Heart left ventricle (tissue), 16 donors: ENCODE measurements at regions of chr15 and their contacts with region 1.

Region 1: GRCh38 chr15:53899366-53899765 is 78.9 kb upstream of the UNC13C start:
- DNase-seq: no peak
- ATAC-seq: no peak
- H3K4me3 ChIP-seq: no peak overlapping the region
- H3K27ac ChIP-seq: no peak overlapping the region
- H3K4me1 ChIP-seq: no peaks in the 10 kb centered on the region
- H3K27me3 ChIP-seq: no peaks in the 10 kb centered on the region
- CTCF ChIP-seq: no peak
- POLR2A ChIP-seq: no peak

Region 2: DNA sequence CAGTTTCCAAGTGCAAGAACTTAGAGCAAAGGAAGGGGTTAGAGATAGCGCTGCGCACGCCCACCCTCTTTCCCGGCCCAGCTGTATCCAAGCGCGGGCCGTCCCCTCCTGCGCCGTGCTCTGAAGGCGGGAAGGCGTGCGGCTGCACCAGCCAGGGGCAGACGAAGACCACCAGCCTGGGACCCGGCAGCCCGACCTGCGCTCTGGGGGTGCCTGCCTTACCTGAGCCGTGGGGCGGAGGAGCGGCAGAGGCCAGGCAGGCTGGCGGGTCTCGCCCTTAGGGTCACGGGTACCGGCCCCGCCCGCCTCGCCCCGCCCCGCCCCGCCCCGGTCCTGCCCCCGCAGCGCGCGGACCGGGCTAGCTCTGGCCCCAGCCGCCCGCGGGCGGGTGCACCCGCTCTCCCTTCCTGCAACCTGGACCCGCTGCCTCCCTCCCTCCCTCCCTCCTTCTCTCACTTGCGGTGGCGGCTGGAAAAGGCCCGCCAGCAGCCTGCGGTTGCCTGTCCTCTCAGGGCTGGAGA is 139.9 kb before region 1 on chr15 and contains the start of gene WDR72:
- intact Hi-C with region 1: no loop called
- DNase-seq: no peak
- ATAC-seq: peak in 1 of 4 donors; percentile 27
- H3K4me3 ChIP-seq: peak within 1 kb of the TSS in 3 of 12 donors; percentile 33 to 36 (median 34)
- H3K27ac ChIP-seq: no peak within 1 kb of the TSS
- H3K4me1 ChIP-seq: peaks cover 0 to 6% (median 0%) of the 10 kb centered on the region in 12 donors
- H3K27me3 ChIP-seq: peaks cover 3 to 39% (median 13%) of the 10 kb centered on the region in 9 donors
- CTCF ChIP-seq: no peak
- POLR2A ChIP-seq: no peak
- total RNA-seq, gene WDR72: 0.08 to 0.11 TPM in 2 of 9 donors, not detected in the others

Region 3: DNA sequence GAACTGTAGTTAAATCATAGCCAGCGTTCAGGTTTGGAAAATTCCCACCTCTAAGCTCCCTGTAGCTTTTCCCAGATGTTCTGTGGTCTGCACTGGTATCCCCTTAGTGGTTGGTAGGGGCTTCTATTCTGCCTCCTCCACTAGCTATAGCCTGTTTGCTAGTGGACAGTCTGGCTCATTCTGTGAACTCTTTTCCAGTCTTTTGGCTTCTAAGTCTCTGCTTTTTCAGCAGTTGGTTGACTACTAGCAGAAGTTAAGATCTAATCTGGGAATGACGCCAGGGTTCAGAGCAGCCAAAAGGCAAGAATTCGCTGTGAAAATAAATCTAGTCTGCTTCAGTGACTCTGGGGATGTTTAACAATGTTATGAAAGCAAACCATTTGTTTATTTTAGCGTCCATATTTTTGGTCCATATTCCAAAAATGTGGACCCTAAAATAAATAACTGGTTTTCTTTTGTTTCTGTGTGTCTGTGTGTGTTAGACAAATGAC is 66.2 kb before region 1 on chr15:
- intact Hi-C with region 1: loop called in 1 of 10 experiments (anchors 10 kb)
- DNase-seq: peak in 3 of 5 donors; percentile 30 to 52 (median 30)
- ATAC-seq: peak; percentile 44 to 67 (median 51)
- H3K4me3 ChIP-seq: no peak overlapping the region
- H3K27ac ChIP-seq: peak overlapping the region in 3 of 12 donors; percentile 12 to 58 (median 41)
- H3K4me1 ChIP-seq: peaks cover 0 to 20% (median 2%) of the 10 kb centered on the region in 12 donors
- H3K27me3 ChIP-seq: peaks cover 0 to 2% (median 0%) of the 10 kb centered on the region in 9 donors
- CTCF ChIP-seq: no peak
- POLR2A ChIP-seq: no peak

Region 4: DNA sequence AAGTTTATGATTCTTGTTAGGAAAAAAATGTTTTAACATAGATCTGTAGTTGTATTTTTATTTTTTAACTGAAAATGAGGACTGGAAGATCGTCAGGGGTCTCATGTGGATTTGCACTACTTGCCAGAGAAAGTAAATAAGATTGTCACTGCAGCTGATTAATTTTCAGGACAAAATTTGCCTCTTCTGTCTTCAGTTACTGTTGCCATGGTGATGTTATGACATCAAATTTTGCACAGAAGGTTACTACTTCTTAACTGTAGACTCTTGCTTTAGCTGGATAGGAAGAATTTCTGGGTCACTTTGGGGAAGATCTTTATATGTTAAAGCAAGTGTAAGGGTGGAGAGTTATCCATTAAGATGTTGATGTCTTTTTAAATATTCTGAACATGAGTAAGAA is 57.7 kb before region 1 on chr15:
- intact Hi-C with region 1: loop called in 2 of 10 experiments (anchors 10 kb)
- DNase-seq: no peak
- ATAC-seq: no peak
- H3K4me3 ChIP-seq: no peak overlapping the region
- H3K27ac ChIP-seq: no peak overlapping the region
- H3K4me1 ChIP-seq: no peaks in the 10 kb centered on the region
- H3K27me3 ChIP-seq: no peaks in the 10 kb centered on the region
- CTCF ChIP-seq: no peak
- POLR2A ChIP-seq: no peak

Region 5: DNA sequence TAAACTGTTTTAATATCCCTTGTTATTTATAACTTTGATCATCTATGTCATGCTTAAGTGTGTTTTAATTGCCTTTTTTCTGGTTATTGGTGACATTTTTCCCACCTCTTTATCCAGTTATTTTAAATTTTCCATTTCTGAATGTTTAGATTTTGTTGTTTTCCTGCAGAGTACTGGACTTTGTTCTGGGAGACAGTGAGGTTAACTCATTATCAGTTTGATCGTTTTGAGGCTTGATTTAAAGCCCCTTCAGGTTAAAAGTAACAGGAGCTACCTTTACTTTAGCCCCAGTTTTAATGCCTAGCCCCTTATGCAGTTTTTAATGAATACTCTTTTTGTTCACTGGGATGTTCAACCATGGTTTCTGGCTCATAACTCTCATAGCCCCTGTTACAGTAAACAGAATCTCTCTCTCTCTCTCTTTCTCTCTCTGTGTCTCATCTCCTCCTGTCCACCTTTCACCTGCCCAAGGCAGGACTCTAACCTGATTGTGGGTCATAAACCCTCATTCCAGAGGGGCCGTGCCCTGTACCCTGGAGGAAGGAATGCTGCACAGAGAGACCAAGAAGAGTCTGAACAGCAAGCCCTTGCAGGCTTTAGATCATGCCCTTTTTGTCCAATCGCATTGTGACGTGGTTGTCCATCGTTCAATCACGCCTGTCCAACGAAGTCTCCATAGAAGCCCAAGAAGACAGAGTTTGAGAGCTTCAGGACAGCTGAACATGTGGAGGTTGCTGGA is 48.1 kb before region 1 on chr15:
- intact Hi-C with region 1: loop called in 2 of 10 experiments (anchors 10 kb)
- DNase-seq: no peak
- ATAC-seq: no peak
- H3K4me3 ChIP-seq: no peak overlapping the region
- H3K27ac ChIP-seq: no peak overlapping the region
- H3K4me1 ChIP-seq: no peaks in the 10 kb centered on the region
- H3K27me3 ChIP-seq: no peaks in the 10 kb centered on the region
- CTCF ChIP-seq: no peak
- POLR2A ChIP-seq: no peak